Posterior vena cava (tissue), 2 donors: ENCODE measurements at regions of chrX and their contacts with region 1.

Region 1: DNA sequence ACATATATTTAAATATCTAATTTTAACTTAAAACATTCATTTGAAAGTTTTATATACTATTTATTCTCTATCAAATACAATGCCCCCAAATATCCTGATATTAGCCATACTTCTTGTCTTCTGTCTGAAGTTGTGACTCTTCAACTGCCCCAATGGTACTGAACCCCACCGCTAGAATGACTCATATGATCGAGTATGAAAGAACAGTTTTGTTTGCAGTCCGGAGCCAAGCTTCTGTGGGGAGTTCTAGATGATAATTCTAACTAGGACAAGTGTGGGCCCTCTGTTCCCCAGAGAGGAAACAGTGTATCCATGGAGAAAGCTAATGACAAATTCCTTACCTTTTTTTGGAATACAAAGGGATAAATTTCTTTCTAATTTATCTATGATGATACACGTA is 24.7 kb upstream of the CT47A1 start:
- DNase-seq: no peak

Region 2: DNA sequence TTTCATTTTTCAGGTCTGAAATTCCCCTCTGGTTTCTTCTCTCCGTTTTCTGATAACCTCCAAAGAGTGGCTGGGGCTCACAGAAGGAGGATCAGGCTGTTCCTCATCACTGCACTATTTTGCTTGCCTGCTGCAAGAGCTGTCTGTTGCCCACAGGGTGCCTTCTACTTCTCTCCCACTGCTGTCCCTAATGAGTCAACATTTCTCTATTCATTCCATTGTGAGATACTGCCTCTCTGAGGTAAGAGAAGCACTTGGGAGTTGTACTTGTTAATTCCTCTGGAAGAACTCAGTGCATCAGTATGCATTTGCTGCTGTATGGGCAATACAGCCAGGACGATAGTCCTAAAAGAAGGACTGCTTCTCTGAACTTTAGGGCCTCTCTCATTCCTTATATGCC is 169.4 kb before region 1 on chrX:
- intact Hi-C with region 1: no loop called
- DNase-seq: no peak

Region 3: GRCh38 chrX:122248681-122249080 is 1238.5 kb after region 1 on chrX:
- intact Hi-C with region 1: loop called in 1 of 2 experiments (anchors 5 kb)
- DNase-seq: no peak